ENCODE measurements at regions of chr7 and their contacts with region 1.

Region 1: GRCh38 chr7:105589356-105590077 is 8.2 kb upstream of the EFCAB10 start:
- DNase-seq: peak in 3 of 4 experiments; percentile 37 to 64 (median 47)
- ATAC-seq: peak; percentile 68
- H3K4me3 ChIP-seq: no peak overlapping the region
- H3K27ac ChIP-seq: no peak overlapping the region
- H3K4me1 ChIP-seq: peaks cover 0 to 13% of the 10 kb centered on the region in 2 experiments; a peak in 3 of 5 replicates
- H3K27me3 ChIP-seq: no peaks in the 10 kb centered on the region
- CTCF ChIP-seq: peak; percentile 66 to 75 (median 71)
- EP300 ChIP-seq: no peak
- POLR2A ChIP-seq: no peak
- RAD21 ChIP-seq: peak; percentile 25 to 72; a peak in 3 of 4 replicates

Region 2: DNA sequence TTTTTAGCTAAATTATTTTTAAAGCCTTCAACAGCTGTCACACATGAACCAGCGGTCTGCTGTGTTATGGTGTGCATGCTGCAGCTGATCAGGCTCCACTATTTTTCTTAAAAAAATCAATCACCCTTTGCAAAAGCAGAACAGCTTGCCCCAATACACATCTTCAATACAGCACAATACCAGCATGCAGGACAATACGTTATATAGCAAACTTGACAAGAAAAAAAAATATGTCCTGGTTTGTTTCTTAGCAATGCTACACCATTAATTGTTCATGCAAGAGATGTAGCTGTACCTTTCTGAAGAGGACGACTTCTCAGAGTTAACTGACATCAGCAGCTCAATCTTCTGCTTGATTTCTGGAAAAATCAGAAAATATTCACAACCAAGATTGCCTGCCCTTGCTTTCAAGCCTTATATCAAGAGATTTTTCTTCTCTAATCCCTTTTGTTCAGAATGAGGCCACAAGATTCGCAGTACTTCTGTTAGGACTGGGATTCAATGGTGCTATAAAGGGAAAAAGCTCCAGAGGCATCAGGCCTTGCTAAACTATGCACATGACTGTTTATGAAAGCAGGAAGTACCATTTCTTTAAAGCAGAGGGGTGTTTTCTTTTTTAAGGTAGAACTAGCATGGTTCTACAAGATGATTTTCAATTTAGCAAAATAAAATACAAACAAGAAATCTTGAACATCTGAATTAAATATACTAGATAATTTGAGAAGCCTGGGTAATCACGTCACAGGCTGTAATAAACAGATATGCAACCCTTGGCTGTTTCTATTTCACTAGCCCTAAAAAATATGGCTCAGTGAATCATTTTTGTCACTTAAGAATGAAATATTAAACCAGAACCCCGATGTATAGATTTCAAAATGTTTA is 320.8 kb before region 1 on chr7:
- CTCF ChIA-PET with region 1: no interaction called
- POLR2A ChIA-PET with region 1: no interaction called
- in situ Hi-C with region 1: no loop called
- intact Hi-C with region 1: loop called (anchors 10 kb)
- DNase-seq: peak in 1 of 4 experiments; percentile 49
- ATAC-seq: peak; percentile 73
- H3K4me3 ChIP-seq: peak overlapping the region; percentile 0; the same call in 1 of the 2 replicates
- H3K27ac ChIP-seq: peak overlapping the region; percentile 22; the same call in 1 of the 3 replicates
- H3K4me1 ChIP-seq: peaks cover 3 to 14% of the 10 kb centered on the region in 2 experiments; a peak in 4 of 5 replicates
- H3K27me3 ChIP-seq: no peaks in the 10 kb centered on the region
- CTCF ChIP-seq: no peak
- EP300 ChIP-seq: no peak
- POLR2A ChIP-seq: no peak
- RAD21 ChIP-seq: no peak

Region 3: DNA sequence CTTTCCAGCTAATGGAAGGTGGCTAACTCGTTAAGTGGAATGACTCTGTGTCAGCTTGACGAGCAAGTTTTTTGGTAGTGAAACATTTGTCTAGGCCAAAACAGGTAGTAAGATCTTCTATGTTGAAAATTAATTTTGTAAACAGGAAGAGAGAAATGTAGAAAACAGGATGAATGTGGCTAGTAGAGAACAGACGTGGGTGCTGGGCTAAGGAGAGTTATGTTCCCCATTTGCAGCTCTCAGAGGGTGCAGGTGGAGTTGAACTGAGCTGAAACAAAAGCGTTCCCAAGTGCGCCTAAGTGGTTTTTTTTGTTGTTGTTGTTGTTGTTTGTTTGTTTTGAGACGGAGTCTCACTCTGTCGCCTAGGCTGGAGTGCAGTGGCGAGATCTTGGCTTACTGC is 141.3 kb before region 1 on chr7:
- CTCF ChIA-PET with region 1: no interaction called
- POLR2A ChIA-PET with region 1: no interaction called
- in situ Hi-C with region 1: no loop called
- intact Hi-C with region 1: loop called (anchors 5 kb)
- DNase-seq: no peak
- ATAC-seq: no peak
- H3K4me3 ChIP-seq: no peak overlapping the region
- H3K27ac ChIP-seq: no peak overlapping the region
- H3K4me1 ChIP-seq: 0 out of 5 replicates have a peak, but pooled peaks cover 0 to 3% of the 10 kb centered on the region in 2 experiments
- H3K27me3 ChIP-seq: no peaks in the 10 kb centered on the region
- CTCF ChIP-seq: no peak
- EP300 ChIP-seq: no peak
- POLR2A ChIP-seq: no peak
- RAD21 ChIP-seq: no peak

Region 4: GRCh38 chr7:105776058-105776751 is 186.7 kb after region 1 on chr7:
- CTCF ChIA-PET with region 1: no interaction called
- POLR2A ChIA-PET with region 1: no interaction called
- in situ Hi-C with region 1: no loop called
- intact Hi-C with region 1: no loop called
- DNase-seq: peak; percentile 41 to 54 (median 44)
- ATAC-seq: peak; percentile 76
- H3K4me3 ChIP-seq: no peak overlapping the region
- H3K27ac ChIP-seq: no peak overlapping the region
- H3K4me1 ChIP-seq: no peaks in the 10 kb centered on the region
- H3K27me3 ChIP-seq: peaks cover 5 to 9% of the 10 kb centered on the region in 2 experiments; a peak in 3 of 5 replicates
- CTCF ChIP-seq: no peak
- EP300 ChIP-seq: no peak
- POLR2A ChIP-seq: no peak
- RAD21 ChIP-seq: no peak

Region 5: DNA sequence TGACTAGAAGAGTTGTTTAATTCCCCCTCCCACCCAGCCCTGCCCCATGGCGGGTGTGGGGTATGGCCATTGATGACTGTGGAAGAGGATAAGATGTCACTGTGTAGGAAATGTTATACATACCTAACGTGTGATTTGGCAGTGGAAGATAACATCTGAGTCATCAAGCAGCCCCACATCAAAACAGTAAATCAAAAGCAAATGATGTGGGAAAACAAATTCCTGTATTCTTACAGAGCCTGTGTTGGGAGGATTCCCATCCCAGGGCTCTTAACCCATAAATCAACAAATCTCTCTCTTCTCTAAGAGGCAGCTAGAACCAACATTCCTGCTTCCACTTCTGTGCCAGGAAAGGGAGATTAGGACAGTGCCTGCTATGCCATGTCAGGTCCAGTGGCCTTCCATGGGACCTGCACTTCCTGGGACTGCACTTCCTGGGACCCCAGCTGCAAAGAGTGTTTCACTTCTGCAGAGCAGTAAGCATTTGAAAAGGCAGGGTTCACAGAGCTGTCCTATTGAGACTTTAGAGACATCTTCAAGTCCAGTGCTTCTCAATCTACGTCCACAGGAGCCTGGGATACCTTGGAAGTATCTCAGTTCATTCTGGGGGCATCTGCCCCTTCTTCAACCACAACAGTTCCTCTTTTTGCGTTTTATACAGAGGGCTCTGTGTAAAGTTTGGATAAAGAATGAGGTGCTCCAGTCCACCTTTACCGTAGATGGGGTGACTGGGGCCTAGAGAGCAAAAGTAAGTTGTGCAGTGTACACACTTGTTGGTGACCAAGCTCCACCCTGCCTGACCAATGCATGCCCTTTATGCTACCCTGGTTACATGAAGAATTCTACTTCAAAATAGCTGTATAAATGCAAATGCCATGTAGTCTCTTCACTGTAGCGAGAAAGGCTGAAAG is 241.1 kb after region 1 on chr7:
- CTCF ChIA-PET with region 1: no interaction called
- POLR2A ChIA-PET with region 1: no interaction called
- in situ Hi-C with region 1: no loop called
- intact Hi-C with region 1: no loop called
- DNase-seq: no peak
- ATAC-seq: no peak
- H3K4me3 ChIP-seq: no peak overlapping the region
- H3K27ac ChIP-seq: no peak overlapping the region
- H3K4me1 ChIP-seq: no peaks in the 10 kb centered on the region
- H3K27me3 ChIP-seq: peaks cover 10 to 17% of the 10 kb centered on the region in 2 experiments; a peak in 4 of 5 replicates
- CTCF ChIP-seq: no peak
- EP300 ChIP-seq: no peak
- POLR2A ChIP-seq: no peak
- RAD21 ChIP-seq: no peak

Measured in K562 (cell line).